Left colon (tissue), 2 donors: ENCODE measurements at regions of chr20 and their contacts with region 1.

Region 1: DNA sequence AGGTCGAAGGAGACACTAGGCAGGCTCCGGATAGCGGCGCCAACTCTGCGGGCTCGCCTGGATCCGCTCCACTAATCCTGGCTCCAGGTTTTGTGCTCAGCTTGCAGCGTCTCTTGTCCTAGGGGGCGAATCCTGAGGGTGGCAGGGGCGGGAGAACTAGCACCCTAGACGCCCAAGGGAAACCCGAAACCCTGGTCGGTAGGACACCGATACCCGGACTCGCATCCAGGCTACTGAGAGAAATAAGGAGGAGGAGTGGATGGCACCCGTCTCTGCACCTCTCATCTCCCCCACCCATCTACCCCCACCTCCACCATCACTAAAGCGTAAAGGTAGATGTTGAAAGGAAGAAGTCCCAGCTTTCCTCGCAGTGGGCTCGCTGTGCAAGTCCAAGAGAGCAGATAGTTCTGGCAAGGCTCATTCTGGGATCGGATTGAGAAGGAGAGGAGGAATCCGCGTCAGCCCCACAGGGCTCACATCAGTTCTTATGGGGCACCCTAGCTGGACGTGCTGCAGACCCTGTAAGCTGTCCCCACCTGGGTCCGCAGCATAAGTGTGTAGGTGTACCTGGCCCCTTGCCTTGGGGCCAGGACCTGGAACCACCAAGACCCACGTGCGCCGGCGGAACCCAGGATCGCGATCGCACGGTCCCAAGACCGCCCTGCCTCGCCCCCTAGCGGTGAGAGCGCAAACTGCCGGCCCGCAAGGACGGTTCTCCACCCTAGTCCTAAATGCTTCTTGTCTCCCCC is 6.9 kb downstream of the SLC32A1 start:
- DNase-seq: peak in 1 of 2 donors; percentile 74
- ATAC-seq: peak; percentile 87

Region 2: GRCh38 chr20:38658879-38659596 is 72.1 kb before region 1 on chr20:
- intact Hi-C with region 1: loop called in 1 of 2 experiments (anchors 10 kb)
- DNase-seq: peak in 1 of 2 donors; percentile 16
- ATAC-seq: peak; percentile 72